B cell (primary cell): ENCODE measurements at regions of chr3 and their contacts with region 1.

Region 1: GRCh38 chr3:12663936-12664908 is at the start of gene RAF1:
- DNase-seq: peak; percentile 98
- ATAC-seq: peak; percentile 92
- H3K4me3 ChIP-seq: peak within 1 kb of the TSS; percentile 76 to 99 (median 85)
- H3K4me3 Mint-ChIP-seq: peak within 1 kb of the TSS; percentile 99
- H3K27ac ChIP-seq: peak within 1 kb of the TSS; percentile 95 to 98
- H3K27ac Mint-ChIP-seq: peak within 1 kb of the TSS; percentile 99
- H3K4me1 ChIP-seq: peaks cover 30 to 33% of the 10 kb centered on the region in 2 donors
- H3K4me1 Mint-ChIP-seq: peaks cover 40% of the 10 kb centered on the region
- H3K27me3 ChIP-seq: no peaks in the 10 kb centered on the region
- H3K27me3 Mint-ChIP-seq: no peaks in the 10 kb centered on the region
- CTCF ChIP-seq: no peak
- total RNA-seq, gene RAF1: 126 and 135 TPM in 2 replicates

Region 2: DNA sequence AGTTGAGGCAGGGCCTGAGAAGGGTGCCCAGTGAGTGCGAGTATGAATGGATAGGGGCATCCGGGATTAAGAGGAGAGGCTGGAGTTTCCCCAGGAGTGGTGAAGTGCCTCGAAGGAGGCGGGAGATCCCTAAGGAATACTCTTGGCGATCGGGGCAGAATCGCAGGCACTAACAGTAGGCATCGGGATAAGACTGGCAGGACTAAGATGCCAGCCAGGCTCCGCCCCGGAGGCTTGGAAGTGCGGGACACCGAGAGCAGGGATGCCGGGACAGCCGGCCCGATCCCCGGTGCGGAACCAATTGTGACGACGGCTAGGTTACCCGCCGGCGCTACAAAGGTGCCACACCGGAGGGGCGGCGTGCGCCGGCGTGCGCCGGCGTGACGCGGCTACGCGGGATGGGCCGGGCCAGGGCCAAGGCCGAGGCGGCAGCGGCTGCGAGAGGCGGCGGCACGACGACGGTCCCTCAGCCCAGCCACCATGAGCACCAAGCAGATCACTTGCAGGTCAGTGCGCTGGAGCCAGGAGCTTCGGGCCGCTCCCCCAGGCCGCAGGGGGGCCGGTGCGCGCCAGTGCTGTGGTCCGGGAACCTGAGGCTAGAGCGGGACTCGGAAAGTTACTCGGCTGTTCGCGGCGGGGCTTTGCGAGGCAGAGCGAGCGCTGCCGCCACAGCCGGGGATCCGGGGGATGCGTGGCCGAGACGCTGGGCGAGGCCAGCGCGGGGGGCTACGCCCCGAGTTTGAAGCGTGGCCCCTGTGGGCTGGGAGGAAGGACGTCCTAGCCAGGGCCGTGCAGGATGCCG is 107.3 kb before region 1 on chr3 and contains the start of gene MKRN2:
- CTCF ChIA-PET with region 1: interaction called, 3 read pairs
- POLR2A ChIA-PET with region 1: no interaction called
- intact Hi-C with region 1: loop called (anchors 1 kb)
- DNase-seq: peak; percentile 91
- ATAC-seq: peak; percentile 96
- H3K4me3 ChIP-seq: peak within 1 kb of the TSS; percentile 85 to 91 (median 90)
- H3K4me3 Mint-ChIP-seq: peak within 1 kb of the TSS; percentile 91
- H3K27ac ChIP-seq: peak within 1 kb of the TSS; percentile 91 to 92
- H3K27ac Mint-ChIP-seq: peak within 1 kb of the TSS; percentile 84
- H3K4me1 ChIP-seq: peaks cover 40 to 41% of the 10 kb centered on the region in 2 donors
- H3K4me1 Mint-ChIP-seq: peaks cover 60% of the 10 kb centered on the region
- H3K27me3 ChIP-seq: peaks cover 0 to 17% (median 5%) of the 10 kb centered on the region in 4 experiments
- H3K27me3 Mint-ChIP-seq: peaks cover 23% of the 10 kb centered on the region
- CTCF ChIP-seq: no peak
- total RNA-seq, gene MKRN2: 25.9 and 29.3 TPM in 2 replicates

Region 3: GRCh38 chr3:12796171-12797123 is 132.2 kb after region 1 on chr3 and contains the start of gene CAND2:
- CTCF ChIA-PET with region 1: no interaction called
- POLR2A ChIA-PET with region 1: no interaction called
- intact Hi-C with region 1: loop called (anchors 5 kb)
- DNase-seq: peak; percentile 65
- ATAC-seq: peak; percentile 75
- H3K4me3 ChIP-seq: peak within 1 kb of the TSS; percentile 14 to 78 (median 55)
- H3K4me3 Mint-ChIP-seq: peak within 1 kb of the TSS; percentile 89
- H3K27ac ChIP-seq: no peak within 1 kb of the TSS
- H3K27ac Mint-ChIP-seq: peak within 1 kb of the TSS; percentile 56
- H3K4me1 ChIP-seq: peaks cover 15 to 26% of the 10 kb centered on the region in 2 donors
- H3K4me1 Mint-ChIP-seq: peaks cover 22% of the 10 kb centered on the region
- H3K27me3 ChIP-seq: peaks cover 0 to 14% (median 6%) of the 10 kb centered on the region in 4 experiments
- H3K27me3 Mint-ChIP-seq: peaks cover 12% of the 10 kb centered on the region
- CTCF ChIP-seq: no peak
- total RNA-seq, gene CAND2: 1.00 and 1.9 TPM in 2 replicates

Region 4: GRCh38 chr3:13414040-13414729 is 750.0 kb after region 1 on chr3:
- CTCF ChIA-PET with region 1: no interaction called
- POLR2A ChIA-PET with region 1: no interaction called
- intact Hi-C with region 1: loop called (anchors 2 kb)
- DNase-seq: peak; percentile 94
- ATAC-seq: peak; percentile 92
- H3K4me3 ChIP-seq: peak overlapping the region in 4 of 5 experiments; percentile 21 to 33 (median 29)
- H3K4me3 Mint-ChIP-seq: peak overlapping the region; percentile 73
- H3K27ac ChIP-seq: peak overlapping the region; percentile 90 to 91
- H3K27ac Mint-ChIP-seq: peak overlapping the region; percentile 98
- H3K4me1 ChIP-seq: peaks cover 60 to 72% of the 10 kb centered on the region in 2 donors
- H3K4me1 Mint-ChIP-seq: peaks cover 61% of the 10 kb centered on the region
- H3K27me3 ChIP-seq: no peaks in the 10 kb centered on the region
- H3K27me3 Mint-ChIP-seq: no peaks in the 10 kb centered on the region
- CTCF ChIP-seq: peak; percentile 26

Region 5: DNA sequence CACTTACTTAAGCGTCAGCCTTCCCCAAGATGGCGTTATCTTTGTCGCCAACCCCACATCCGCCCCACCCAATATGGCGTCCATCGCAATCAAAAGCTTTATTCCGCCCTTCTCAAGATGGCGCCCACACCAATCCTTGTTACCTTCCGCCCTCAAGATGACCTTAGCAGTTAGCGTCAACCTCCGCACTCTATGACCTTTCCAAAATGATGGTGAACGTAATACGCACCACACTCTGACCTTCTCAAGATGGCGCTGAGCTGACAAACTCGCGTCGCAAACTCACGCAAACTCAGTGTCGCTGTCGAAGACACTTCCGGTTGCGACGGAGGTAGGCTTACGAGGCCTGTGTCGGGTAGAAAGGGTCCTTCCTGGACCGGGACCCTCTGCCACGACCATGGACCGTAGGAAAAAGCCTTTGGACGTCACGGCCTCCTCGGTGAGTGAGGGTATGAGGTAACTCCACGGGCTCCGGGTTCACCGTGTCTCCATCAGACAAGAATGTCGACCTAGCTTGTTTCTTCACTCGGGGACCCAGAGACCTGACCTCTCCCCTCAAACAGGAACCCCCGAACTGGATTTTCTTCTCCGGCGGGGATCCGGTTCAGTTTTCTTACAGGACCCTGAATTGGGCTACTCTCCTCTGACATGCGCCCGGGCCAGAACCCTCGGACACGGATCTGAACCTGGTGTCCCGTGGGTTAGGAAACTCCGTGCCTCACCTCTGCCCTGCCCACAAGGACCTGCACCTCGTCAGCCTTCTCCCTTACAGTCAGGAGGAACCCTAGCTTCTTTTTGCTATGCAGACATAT is 1987.4 kb after region 1 on chr3 and contains the start of gene CCDC174:
- CTCF ChIA-PET with region 1: no interaction called
- POLR2A ChIA-PET with region 1: no interaction called
- intact Hi-C with region 1: loop called (anchors 10 kb)
- DNase-seq: peak; percentile 100
- ATAC-seq: peak; percentile 98
- H3K4me3 ChIP-seq: peak within 1 kb of the TSS; percentile 79 to 92 (median 88)
- H3K4me3 Mint-ChIP-seq: peak within 1 kb of the TSS; percentile 91
- H3K27ac ChIP-seq: peak within 1 kb of the TSS; percentile 97 to 98
- H3K27ac Mint-ChIP-seq: peak within 1 kb of the TSS; percentile 94
- H3K4me1 ChIP-seq: peaks cover 21 to 28% of the 10 kb centered on the region in 2 donors
- H3K4me1 Mint-ChIP-seq: peaks cover 36% of the 10 kb centered on the region
- H3K27me3 ChIP-seq: no peaks in the 10 kb centered on the region
- H3K27me3 Mint-ChIP-seq: no peaks in the 10 kb centered on the region
- CTCF ChIP-seq: no peak
- total RNA-seq, gene CCDC174: 36.5 and 47.1 TPM in 2 replicates